IMR-90 (cell line): ENCODE measurements at regions of chr16 and their contacts with region 1.

Region 1: DNA sequence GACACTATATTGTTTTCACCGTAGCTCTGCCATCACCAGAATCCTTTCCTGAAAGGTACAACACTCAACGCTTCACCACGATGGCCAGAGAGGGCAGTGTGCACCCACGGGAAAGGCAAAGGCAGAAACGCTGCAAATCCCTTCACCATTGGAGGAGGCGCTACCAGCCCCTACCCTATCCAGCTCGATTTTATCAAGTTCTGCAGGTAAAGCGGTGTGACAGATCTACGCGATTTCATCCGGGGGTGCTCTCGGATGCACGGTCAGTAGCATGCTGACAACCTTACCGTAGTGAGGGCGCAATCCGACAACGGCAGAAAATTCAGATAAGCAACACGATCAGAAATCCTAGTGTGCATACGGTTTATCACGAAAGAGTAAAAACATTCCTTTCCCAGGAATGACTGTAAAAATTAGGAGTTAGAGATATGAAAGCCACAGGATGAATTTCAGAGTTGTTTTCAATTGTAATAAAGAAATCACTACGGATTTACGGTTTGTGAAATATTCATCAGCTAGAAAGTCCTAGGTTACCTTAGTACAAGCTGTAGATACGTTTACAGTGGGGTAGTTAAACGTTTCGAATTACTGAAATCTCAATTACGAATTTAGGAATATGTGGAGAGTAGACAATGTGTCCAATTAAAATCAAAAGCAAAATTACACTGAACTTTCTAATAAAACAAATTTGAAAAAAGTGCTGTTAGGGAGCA is 1.8 kb downstream of the NETO2 start:
- DNase-seq: peak; percentile 83
- ATAC-seq: peak; percentile 59
- H3K4me3 ChIP-seq: peak overlapping the region; percentile 62
- H3K27ac ChIP-seq: no peak overlapping the region
- H3K4me1 ChIP-seq: no peaks in the 10 kb centered on the region
- H3K27me3 ChIP-seq: no peaks in the 10 kb centered on the region
- CTCF ChIP-seq: peak; percentile 95
- POLR2A ChIP-seq: 0 out of 2 replicates have a peak, but pooled peaks have one; percentile 33
- RAD21 ChIP-seq: peak; percentile 94

Region 2: DNA sequence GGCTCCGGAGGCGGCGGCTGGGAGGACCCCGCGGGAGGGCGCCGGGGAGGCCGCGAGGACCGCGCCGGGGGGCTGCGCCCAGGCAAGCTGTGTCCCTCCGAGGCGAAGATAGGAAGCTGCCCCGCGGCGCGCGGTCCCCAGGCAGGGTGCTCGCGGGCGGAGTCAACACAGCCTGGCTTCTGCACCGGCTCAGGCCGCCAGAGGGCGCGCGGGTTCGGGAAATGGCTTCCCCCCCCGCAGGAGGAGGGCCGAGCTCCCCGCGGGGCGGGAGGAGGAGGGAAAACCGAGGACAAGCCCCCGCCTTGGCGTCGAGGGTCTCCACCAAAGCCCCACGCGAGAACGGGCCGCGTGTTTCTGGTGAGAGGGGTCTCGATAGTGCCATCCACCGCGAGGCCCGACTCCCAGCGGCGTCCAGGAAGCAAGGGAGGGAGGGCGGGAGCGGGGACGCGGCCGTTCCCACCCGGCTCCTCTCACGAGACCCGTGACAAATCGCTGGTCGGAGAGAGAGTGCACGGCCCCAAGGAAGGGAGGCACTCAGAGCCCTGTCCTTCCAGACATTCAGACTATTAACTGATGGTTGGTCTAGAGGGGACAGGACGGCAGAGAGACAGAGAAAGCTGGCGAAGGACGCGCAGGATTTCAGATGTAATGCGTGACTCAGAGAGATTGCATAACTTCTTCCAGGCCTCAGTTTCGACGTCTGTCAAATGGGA is 104.0 kb before region 1 on chr16:
- CTCF ChIA-PET with region 1: interaction called, 12 read pairs
- POLR2A ChIA-PET with region 1: no interaction called
- dilution Hi-C with region 1: no loop called
- in situ Hi-C with region 1: no loop called
- intact Hi-C with region 1: loop called (anchors 2 kb)
- DNase-seq: peak; percentile 62
- ATAC-seq: peak; percentile 99
- H3K4me3 ChIP-seq: peak overlapping the region; percentile 74
- H3K27ac ChIP-seq: peak overlapping the region; percentile 62
- H3K4me1 ChIP-seq: no peaks in the 10 kb centered on the region
- H3K27me3 ChIP-seq: peaks cover 4% of the 10 kb centered on the region
- CTCF ChIP-seq: peak; percentile 92
- POLR2A ChIP-seq: no peak
- RAD21 ChIP-seq: peak; percentile 75

Region 3: GRCh38 chr16:47460711-47461597 is 319.0 kb after region 1 on chr16 and contains the starts of genes ITFG1 and PHKB:
- CTCF ChIA-PET with region 1: interaction called, 3 read pairs
- POLR2A ChIA-PET with region 1: no interaction called
- dilution Hi-C with region 1: no loop called
- in situ Hi-C with region 1: no loop called
- intact Hi-C with region 1: loop called (anchors 1 kb)
- DNase-seq: peak; percentile 90
- ATAC-seq: peak; percentile 95
- H3K4me3 ChIP-seq: peak within 1 kb of the TSS; percentile 84
- H3K27ac ChIP-seq: peak within 1 kb of the TSS; percentile 87
- H3K4me1 ChIP-seq: peaks cover 4% of the 10 kb centered on the region; the same call in 1 of the 2 replicates
- H3K27me3 ChIP-seq: no peaks in the 10 kb centered on the region
- CTCF ChIP-seq: peak; percentile 19; the same call in 1 of the 2 replicates
- POLR2A ChIP-seq: peak; percentile 83
- RAD21 ChIP-seq: no peak; the same call in none of the 2 replicates
- total RNA-seq, gene ITFG1: 57.5 and 60.4 TPM in 2 replicates
- total RNA-seq, gene PHKB: 58.6 and 60.0 TPM in 2 replicates

Region 4: GRCh38 chr16:48117217-48118105 is 975.5 kb after region 1 on chr16:
- CTCF ChIA-PET with region 1: no interaction called
- POLR2A ChIA-PET with region 1: no interaction called
- dilution Hi-C with region 1: no loop called
- in situ Hi-C with region 1: no loop called
- intact Hi-C with region 1: loop called (anchors 1 kb)
- DNase-seq: no peak
- ATAC-seq: peak; percentile 71
- H3K4me3 ChIP-seq: no peak overlapping the region
- H3K27ac ChIP-seq: no peak overlapping the region
- H3K4me1 ChIP-seq: peaks cover 1% of the 10 kb centered on the region; the same call in 1 of the 2 replicates
- H3K27me3 ChIP-seq: no peaks in the 10 kb centered on the region
- CTCF ChIP-seq: peak; percentile 76
- POLR2A ChIP-seq: no peak
- RAD21 ChIP-seq: peak; percentile 67

Region 5: GRCh38 chr16:48164907-48165726 is 1023.2 kb after region 1 on chr16:
- CTCF ChIA-PET with region 1: interaction called, 26 read pairs
- POLR2A ChIA-PET with region 1: no interaction called
- dilution Hi-C with region 1: no loop called
- in situ Hi-C with region 1: loop called (anchors 5 kb)
- intact Hi-C with region 1: loop called (anchors 2 kb)
- DNase-seq: peak; percentile 65
- ATAC-seq: peak; percentile 99
- H3K4me3 ChIP-seq: no peak overlapping the region
- H3K27ac ChIP-seq: no peak overlapping the region
- H3K4me1 ChIP-seq: no peaks in the 10 kb centered on the region; the same call in 1 of the 2 replicates
- H3K27me3 ChIP-seq: peaks cover 2% of the 10 kb centered on the region; the same call in 1 of the 2 replicates
- CTCF ChIP-seq: peak; percentile 93
- POLR2A ChIP-seq: no peak
- RAD21 ChIP-seq: peak; percentile 98